ENCODE measurements at regions of chr12 and their contacts with region 1.

Region 1: GRCh38 chr12:114508529-114509129 is 102.7 kb upstream of the TBX5 start:
- DNase-seq: peak in 5 of 6 donors; percentile 30 to 73 (median 37)
- ATAC-seq: peak in 3 of 4 donors; percentile 73 to 81 (median 81)
- H3K4me3 ChIP-seq: no peak overlapping the region
- H3K27ac ChIP-seq: no peak overlapping the region
- H3K4me1 ChIP-seq: no peaks in the 10 kb centered on the region
- H3K27me3 ChIP-seq: peaks cover 0 to 11% (median 1%) of the 10 kb centered on the region in 4 donors
- CTCF ChIP-seq: peak in 3 of 4 donors; percentile 63 to 71 (median 70)

Region 2: DNA sequence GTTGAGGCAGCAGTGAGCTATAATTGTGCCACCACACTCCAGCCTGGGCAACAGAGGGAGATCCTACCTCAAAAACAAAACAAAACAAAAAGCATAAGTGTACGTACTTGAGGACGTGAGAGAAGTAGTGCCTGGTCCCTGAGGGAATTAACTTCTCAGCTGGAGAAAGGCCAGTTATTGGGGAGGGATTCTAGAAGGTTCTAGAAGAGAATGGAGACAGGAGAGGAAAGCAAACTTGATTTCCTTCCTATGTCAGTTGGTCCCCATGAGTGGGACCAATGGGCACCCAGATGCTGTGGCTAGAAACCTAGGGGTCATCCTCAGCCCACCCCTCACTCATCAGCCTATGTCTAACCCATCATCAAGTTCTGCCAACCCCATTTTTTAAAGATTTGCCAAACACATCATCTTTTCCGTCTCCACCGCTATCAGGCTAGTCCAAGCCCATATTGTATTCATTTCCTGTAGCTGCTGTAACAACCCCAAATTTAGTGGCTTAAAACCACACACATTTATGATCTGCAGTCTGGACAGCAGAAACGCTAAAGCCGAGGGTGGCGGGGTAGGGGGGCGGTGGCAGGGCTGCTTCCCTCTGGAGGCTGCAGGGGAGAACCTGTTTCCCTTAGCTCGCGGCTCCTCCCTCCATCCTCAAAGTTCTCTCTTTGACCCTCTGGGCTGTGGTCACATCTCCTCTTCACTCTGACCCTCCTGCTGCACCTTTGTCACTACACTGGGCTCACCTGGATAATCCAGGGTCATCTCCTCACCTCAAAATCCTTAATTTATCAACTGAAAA is 535.3 kb before region 1 on chr12:
- intact Hi-C with region 1: loop called in 1 of 3 experiments (anchors 10 kb)
- DNase-seq: no peak
- ATAC-seq: no peak
- H3K4me3 ChIP-seq: no peak overlapping the region
- H3K27ac ChIP-seq: no peak overlapping the region
- H3K4me1 ChIP-seq: no peaks in the 10 kb centered on the region
- H3K27me3 ChIP-seq: peaks cover 0 to 5% (median 2%) of the 10 kb centered on the region in 4 donors
- CTCF ChIP-seq: no peak

Region 3: GRCh38 chr12:113980537-113981337 is 527.9 kb before region 1 on chr12:
- intact Hi-C with region 1: loop called (anchors 5 to 10 kb)
- DNase-seq: peak in 3 of 6 donors; percentile 11 to 50 (median 20)
- ATAC-seq: peak; percentile 66 to 93 (median 86)
- H3K4me3 ChIP-seq: no peak overlapping the region
- H3K27ac ChIP-seq: no peak overlapping the region
- H3K4me1 ChIP-seq: no peaks in the 10 kb centered on the region
- H3K27me3 ChIP-seq: peaks cover 0 to 8% (median 3%) of the 10 kb centered on the region in 4 donors
- CTCF ChIP-seq: peak; percentile 77 to 91 (median 82)

Measured in pancreas (tissue), 10 donors.